HEK293 (cell line): ENCODE measurements at regions of chrX and their contacts with region 1.

Region 1: GRCh38 chrX:110444996-110445395 is 86.3 kb downstream of the RTL9 start:
- H3K4me3 ChIP-seq: no peak overlapping the region
- H3K27ac ChIP-seq: no peak overlapping the region
- H3K4me1 ChIP-seq: no peaks in the 10 kb centered on the region
- CTCF ChIP-seq: no peak

Region 2: GRCh38 chrX:110836982-110837381 is 392.0 kb after region 1 on chrX:
- CTCF ChIA-PET with region 1: interaction called, 11 read pairs
- POLR2A ChIA-PET with region 1: no interaction called
- H3K4me3 ChIP-seq: no peak overlapping the region
- H3K27ac ChIP-seq: no peak overlapping the region
- H3K4me1 ChIP-seq: no peaks in the 10 kb centered on the region
- CTCF ChIP-seq: peak; percentile 33; the same call in 1 of the 2 replicates